ENCODE measurements at regions of chr12 and their contacts with region 1.

Region 1: DNA sequence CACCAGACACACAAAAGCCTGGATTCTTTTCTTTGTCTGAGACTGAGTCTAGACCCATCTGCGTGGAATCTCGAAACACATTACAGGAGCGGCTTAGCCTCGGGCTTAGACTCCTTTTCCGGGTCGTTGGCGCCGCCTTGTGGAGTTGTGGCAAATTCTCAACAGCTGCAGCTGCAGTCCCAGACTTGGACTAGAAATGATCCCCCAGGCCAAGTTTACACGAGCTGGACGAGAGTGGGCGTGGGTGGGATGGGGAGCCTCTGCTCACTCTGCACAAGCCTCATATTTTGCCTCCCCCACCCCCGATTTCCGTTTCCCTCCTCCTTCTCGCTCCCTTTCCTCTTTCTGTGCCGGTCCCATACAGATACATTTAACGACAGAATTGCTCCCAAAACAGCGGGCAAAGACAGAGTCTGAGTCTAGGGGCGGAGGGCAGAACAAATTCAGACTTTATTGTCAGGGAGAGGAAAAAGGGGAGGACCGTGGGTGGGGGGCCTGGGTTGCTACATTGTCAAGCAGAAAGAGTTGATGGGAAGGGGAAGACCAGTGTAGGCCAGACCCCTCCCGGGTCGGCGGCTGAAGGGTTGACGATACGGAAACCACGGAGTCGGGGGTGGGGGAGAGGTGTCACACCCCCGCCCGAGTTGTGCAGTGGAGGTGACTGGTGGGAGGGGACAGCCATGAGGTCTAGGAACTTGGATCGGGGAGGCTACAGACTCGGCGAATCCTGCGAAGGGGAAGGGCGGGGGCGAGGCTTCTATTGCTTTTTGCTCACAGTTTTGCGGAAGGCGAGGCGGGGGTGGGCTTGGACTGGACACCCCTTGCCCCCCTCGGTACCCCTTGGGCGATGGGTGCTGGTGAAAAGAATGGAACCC is 4.7 kb upstream of the GPR84 start:
- DNase-seq: peak; percentile 90
- H3K4me3 Mint-ChIP-seq: peak overlapping the region; percentile 66
- H3K27ac Mint-ChIP-seq: no peak overlapping the region
- H3K4me1 Mint-ChIP-seq: peaks cover 35% of the 10 kb centered on the region
- H3K27me3 Mint-ChIP-seq: no peaks in the 10 kb centered on the region
- CTCF ChIP-seq: peak; percentile 71

Region 2: DNA sequence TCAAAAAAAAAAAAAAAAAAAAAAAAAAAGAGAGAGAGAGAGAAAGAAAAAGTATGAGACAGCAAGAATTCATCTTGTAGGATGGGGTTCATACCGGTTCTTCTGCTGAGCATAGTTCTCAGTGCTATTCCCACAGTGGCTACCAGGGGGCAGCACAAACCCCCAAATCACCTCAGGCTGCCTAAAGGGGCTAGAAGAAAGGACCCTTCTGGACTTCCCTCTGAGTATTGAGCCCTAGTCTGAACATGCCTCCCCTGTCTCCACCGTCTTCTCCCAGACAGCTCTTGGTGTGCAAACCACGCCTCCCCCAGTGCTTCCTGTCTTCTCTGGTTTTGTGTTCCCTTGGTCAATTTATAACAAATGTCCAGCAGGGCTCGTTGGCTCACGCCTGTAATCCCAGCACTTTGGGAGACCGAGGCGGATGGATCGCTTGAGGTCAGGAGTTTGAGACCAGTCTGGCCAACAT is 148.8 kb before region 1 on chr12:
- CTCF ChIA-PET with region 1: interaction called, 23 read pairs
- POLR2A ChIA-PET with region 1: interaction called, 4 read pairs
- intact Hi-C with region 1: loop called (anchors 2 kb)
- DNase-seq: peak; percentile 75
- H3K4me3 Mint-ChIP-seq: no peak overlapping the region
- H3K27ac Mint-ChIP-seq: no peak overlapping the region
- H3K4me1 Mint-ChIP-seq: peaks cover 18% of the 10 kb centered on the region
- H3K27me3 Mint-ChIP-seq: no peaks in the 10 kb centered on the region
- CTCF ChIP-seq: peak; percentile 78

Region 3: GRCh38 chr12:54300732-54301427 is 68.1 kb before region 1 on chr12 and contains the start of gene NFE2:
- CTCF ChIA-PET with region 1: interaction called, 13 read pairs
- POLR2A ChIA-PET with region 1: no interaction called
- intact Hi-C with region 1: no loop called
- DNase-seq: peak; percentile 79
- H3K4me3 Mint-ChIP-seq: peak within 1 kb of the TSS; percentile 4
- H3K27ac Mint-ChIP-seq: peak within 1 kb of the TSS; percentile 6
- H3K4me1 Mint-ChIP-seq: peaks cover 46% of the 10 kb centered on the region
- H3K27me3 Mint-ChIP-seq: no peaks in the 10 kb centered on the region
- CTCF ChIP-seq: no peak
- total RNA-seq, gene NFE2: 0.40 and 0.64 TPM in 2 replicates

Region 4: DNA sequence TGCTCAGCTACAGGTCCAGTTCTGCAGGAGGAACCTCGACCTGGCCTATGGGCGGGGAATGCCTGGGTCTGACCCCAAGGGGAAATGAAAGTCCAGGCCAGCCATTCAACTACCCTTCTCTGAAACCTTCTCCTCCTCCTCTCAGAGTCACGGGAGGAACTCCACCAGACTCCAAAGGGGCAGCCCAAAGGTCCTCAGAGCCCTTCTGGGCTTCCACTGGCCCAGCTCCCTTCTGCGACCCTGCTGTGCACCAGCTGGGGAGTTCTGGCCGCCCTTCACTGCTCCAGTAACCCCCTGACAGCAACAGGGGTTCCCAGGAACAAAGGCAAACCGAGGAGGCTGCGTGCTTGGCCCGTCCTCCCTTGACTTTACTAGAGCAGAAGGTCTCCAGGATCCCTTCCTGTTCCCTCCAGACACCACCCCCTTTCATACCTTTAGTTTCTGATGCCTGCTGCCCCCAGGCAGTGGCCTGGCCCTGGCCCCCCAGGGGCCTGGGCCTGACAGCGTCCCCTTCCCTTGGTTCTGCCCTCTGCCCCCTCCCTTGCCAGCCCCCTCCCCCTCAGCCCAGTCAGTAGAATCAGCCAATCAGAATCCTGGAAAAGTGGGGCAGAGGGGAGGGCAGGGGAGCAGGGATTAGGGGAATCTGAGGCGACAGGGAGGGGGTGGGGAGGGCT is 16.4 kb after region 1 on chr12:
- CTCF ChIA-PET with region 1: interaction called, 109 read pairs
- POLR2A ChIA-PET with region 1: interaction called, 20 read pairs
- intact Hi-C with region 1: no loop called
- DNase-seq: no peak
- H3K4me3 Mint-ChIP-seq: no peak overlapping the region
- H3K27ac Mint-ChIP-seq: no peak overlapping the region
- H3K4me1 Mint-ChIP-seq: peaks cover 36% of the 10 kb centered on the region
- H3K27me3 Mint-ChIP-seq: no peaks in the 10 kb centered on the region
- CTCF ChIP-seq: no peak

Region 5: DNA sequence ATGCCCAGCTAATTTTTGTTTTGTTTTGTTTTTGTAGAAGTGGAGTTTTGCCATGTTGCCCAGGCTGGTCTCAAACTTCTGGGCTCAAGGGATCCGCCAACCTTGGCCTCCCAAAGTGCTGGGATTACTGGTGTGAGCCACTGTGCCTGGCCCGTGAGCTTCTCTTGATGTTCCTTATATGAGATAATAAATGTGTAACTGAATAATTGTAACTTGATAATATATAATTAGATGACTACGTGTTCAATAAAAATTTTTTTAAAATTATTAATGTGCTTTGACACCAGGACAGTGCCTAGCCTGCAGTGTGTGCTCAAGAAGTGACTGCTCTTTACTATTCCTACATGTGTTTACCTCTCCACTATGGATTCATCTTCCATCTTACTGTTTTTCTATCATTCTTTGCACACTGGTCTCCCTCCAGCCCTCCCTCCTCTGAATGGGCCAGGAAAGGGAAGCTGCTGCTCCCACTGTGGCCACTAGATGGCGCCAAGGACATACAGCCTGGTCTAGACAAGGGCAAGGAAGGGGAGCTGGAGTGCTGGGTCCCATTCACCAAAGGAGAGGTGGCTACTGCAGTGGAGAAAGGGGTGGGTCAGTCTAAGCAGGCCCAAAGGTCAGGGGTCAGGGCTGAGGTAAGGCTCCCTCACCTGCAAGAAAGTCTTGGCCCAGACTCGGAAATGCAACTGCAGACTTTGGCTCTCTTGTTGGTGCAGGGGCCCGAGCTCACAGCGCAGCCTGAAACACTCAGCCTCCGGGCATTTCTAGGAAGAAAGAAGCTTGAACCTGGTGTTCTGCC is 30.2 kb after region 1 on chr12:
- CTCF ChIA-PET with region 1: interaction called, 27 read pairs
- POLR2A ChIA-PET with region 1: no interaction called
- intact Hi-C with region 1: loop called (anchors 1 kb)
- DNase-seq: peak; percentile 88
- H3K4me3 Mint-ChIP-seq: no peak overlapping the region
- H3K27ac Mint-ChIP-seq: no peak overlapping the region
- H3K4me1 Mint-ChIP-seq: peaks cover 13% of the 10 kb centered on the region
- H3K27me3 Mint-ChIP-seq: no peaks in the 10 kb centered on the region
- CTCF ChIP-seq: peak; percentile 91

Measured in MCF 10A (cell line).